ENCODE measurements at regions of chr18 and their contacts with region 1.

Region 1: DNA sequence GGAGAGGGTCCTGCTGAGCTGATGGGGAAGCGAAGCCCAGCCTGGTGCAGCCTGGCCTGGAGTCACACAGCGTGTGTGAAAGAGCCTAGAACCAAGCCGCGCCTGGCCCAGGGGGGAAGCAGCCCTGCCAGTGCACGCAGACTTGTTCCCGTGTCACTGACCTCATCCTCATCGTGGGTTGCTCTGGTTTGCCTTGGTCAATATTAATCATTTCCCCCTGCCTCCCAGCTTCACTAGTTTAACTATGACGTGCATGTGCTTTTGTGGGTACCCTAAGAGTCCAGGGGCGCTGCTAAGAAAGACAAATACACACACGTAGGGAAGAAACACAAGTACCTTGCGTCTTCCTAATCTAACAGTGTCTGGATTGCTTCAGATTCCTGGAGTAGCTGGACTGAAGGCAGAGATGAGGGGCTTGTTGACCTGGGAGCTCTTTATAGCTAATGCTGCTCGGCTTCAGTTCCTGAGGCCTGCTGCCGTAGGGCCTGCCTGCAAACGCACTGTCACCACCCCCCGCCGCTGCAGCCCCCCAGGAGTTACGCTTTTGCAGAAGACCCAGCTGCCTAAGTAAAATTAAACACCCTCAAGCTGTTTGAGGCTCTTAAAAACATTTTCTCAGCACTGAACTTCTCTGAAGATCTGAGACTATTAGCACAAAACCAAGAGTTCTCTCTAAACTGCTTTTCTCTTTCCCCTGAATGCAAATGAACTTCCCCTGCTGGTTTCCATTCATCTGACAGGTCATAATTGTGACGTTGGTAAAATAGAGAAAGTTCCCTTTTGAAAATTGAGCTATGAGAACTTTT is 159.2 kb downstream of the FAM210A start:
- DNase-seq: peak; percentile 56 to 85 (median 76)
- H3K4me3 ChIP-seq: peak overlapping the region in 4 of 7 experiments; percentile 15 to 49 (median 32)
- H3K27ac ChIP-seq: peak overlapping the region; percentile 65 to 78
- H3K4me1 ChIP-seq: peaks cover 26 to 81% (median 59%) of the 10 kb centered on the region in 4 experiments
- H3K27me3 ChIP-seq: no peaks in the 10 kb centered on the region

Region 2: DNA sequence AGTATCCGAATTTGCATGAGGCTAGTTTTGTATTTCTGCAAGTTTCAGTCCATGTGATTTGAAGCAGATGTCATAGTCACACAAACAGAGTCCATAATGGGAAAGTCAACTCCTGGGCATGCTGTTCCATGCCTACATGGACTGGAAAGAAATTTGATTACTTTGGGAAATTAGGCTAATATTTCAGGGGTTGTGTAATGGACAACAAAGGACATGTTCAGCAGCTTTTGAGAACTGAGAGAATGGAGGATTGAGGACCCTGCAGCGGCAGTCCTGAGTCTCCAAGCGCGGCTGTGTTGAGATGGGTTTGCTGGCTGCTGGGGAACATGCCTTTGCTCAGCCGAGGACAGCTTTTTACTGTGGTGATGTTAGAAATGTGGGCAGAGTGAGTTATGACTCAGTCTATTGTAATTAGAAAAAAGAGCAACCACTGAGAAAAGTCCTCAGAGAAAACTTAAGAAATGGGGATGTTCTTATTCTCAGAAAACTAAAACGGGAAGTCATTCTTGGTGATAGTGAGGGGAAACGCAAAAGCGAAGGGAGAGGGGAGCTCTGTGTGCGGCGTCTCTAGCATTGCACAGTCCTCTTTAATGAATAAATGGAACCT is 10.1 kb after region 1 on chr18:
- CTCF ChIA-PET with region 1: interaction called, 19 read pairs
- POLR2A ChIA-PET with region 1: no interaction called
- DNase-seq: peak; percentile 66 to 91 (median 88)
- H3K4me3 ChIP-seq: peak overlapping the region in 4 of 7 experiments; percentile 2 to 51 (median 28)
- H3K27ac ChIP-seq: no peak overlapping the region
- H3K4me1 ChIP-seq: peaks cover 13 to 56% (median 34%) of the 10 kb centered on the region in 4 experiments
- H3K27me3 ChIP-seq: no peaks in the 10 kb centered on the region

Region 3: GRCh38 chr18:13582178-13582670 is 15.1 kb after region 1 on chr18:
- CTCF ChIA-PET with region 1: interaction called, 19 read pairs
- POLR2A ChIA-PET with region 1: no interaction called
- DNase-seq: no peak
- H3K4me3 ChIP-seq: no peak overlapping the region
- H3K27ac ChIP-seq: no peak overlapping the region
- H3K4me1 ChIP-seq: peaks cover 20 to 76% (median 35%) of the 10 kb centered on the region in 4 experiments
- H3K27me3 ChIP-seq: no peaks in the 10 kb centered on the region